H1 (cell line): ENCODE measurements at regions of chr1 and their contacts with region 1.

Region 1: GRCh38 chr1:211643324-211644212 is 31.9 kb downstream of the NEK2 start:
- DNase-seq: peak in 1 of 2 experiments; percentile 45
- H3K4me3 ChIP-seq: no peak overlapping the region
- H3K27ac ChIP-seq: no peak overlapping the region
- H3K4me1 ChIP-seq: peaks cover 0 to 3% (median 2%) of the 10 kb centered on the region in 4 experiments; a peak in 2 of 7 replicates
- H3K27me3 ChIP-seq: no peaks in the 10 kb centered on the region
- CTCF ChIP-seq: no peak
- EP300 ChIP-seq: no peak
- POLR2A ChIP-seq: no peak
- RAD21 ChIP-seq: no peak

Region 2: GRCh38 chr1:211632631-211633523 is 10.7 kb before region 1 on chr1:
- CTCF ChIA-PET with region 1: interaction called, 11 read pairs
- POLR2A ChIA-PET with region 1: interaction called, 7 read pairs
- DNase-seq: no peak
- H3K4me3 ChIP-seq: no peak overlapping the region
- H3K27ac ChIP-seq: no peak overlapping the region
- H3K4me1 ChIP-seq: peaks cover 0 to 6% (median 1%) of the 10 kb centered on the region in 4 experiments; a peak in 1 of 7 replicates
- H3K27me3 ChIP-seq: no peaks in the 10 kb centered on the region
- CTCF ChIP-seq: no peak
- EP300 ChIP-seq: no peak
- POLR2A ChIP-seq: no peak
- RAD21 ChIP-seq: no peak

Region 3: GRCh38 chr1:211830330-211831142 is 187.0 kb after region 1 on chr1 and contains the start of gene LPGAT1:
- CTCF ChIA-PET with region 1: no interaction called
- POLR2A ChIA-PET with region 1: no interaction called
- DNase-seq: peak in 1 of 2 experiments; percentile 90
- H3K4me3 ChIP-seq: peak within 1 kb of the TSS; percentile 47 to 74 (median 57)
- H3K27ac ChIP-seq: no peak within 1 kb of the TSS
- H3K4me1 ChIP-seq: peaks cover 0 to 7% (median 3%) of the 10 kb centered on the region in 4 experiments; a peak in 5 of 7 replicates
- H3K27me3 ChIP-seq: peaks cover 0 to 12% (median 6%) of the 10 kb centered on the region in 4 experiments; a peak in 5 of 7 replicates
- CTCF ChIP-seq: peak; percentile 47 to 59 (median 58)
- EP300 ChIP-seq: no peak
- POLR2A ChIP-seq: peak in 1 of 2 experiments; percentile 43; a peak in 1 of 3 replicates
- RAD21 ChIP-seq: peak; percentile 34 to 54
- total RNA-seq, gene LPGAT1: 13.5 and 14.6 TPM in 2 replicates

Region 4: GRCh38 chr1:211985556-211986264 is 342.1 kb after region 1 on chr1:
- CTCF ChIA-PET with region 1: no interaction called
- POLR2A ChIA-PET with region 1: no interaction called
- DNase-seq: no peak
- H3K4me3 ChIP-seq: no peak overlapping the region
- H3K27ac ChIP-seq: no peak overlapping the region
- H3K4me1 ChIP-seq: no peaks in the 10 kb centered on the region
- H3K27me3 ChIP-seq: no peaks in the 10 kb centered on the region
- CTCF ChIP-seq: no peak
- EP300 ChIP-seq: no peak
- POLR2A ChIP-seq: no peak
- RAD21 ChIP-seq: no peak